Activated CD4-positive, alpha-beta T cell treated with anti-CD3 and anti-CD28 coated beads, Interleukin-2, amount 10 ng/mL, durations not matched to agents 24 days and 14 days (primary cell): ENCODE measurements at regions of chr7 and their contacts with region 1.

Region 1: DNA sequence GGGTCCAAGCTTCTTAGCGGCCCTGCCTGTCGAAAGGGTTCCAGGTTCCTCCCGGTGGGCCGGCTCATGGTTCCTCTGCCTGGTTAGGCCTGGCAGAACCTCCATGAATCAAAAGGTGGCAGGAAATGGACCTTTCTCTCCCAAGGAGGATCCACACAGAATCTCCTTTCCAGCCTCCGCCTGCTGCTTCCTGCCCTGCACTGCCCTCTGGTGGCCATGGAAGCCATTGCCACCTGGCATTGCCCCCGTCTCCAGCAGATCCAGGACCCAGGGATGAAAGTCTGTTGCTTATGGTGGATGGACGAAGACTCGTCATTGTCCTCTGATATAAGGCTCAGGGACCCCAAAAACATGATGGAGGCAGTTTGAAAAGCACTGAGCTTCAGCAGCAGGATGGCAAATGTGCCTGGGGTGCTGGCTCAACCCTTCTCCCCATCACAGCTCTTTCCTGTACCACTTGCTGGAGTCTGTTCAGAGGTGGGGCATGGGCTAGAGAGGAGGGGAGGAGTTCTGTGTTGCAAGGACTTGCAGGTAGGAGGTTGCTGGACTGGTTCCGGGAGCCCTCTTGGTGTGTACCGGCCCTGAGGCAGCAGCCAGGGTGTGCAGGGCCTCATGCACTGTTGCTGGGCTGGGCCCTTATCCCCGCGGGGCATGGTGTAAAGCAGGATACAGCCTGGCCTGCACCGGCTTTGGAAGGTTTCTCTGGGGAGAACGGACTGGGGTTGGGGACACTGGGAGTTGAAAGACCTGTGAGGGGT is 11.3 kb upstream of the INMT start:
- DNase-seq: peak; percentile 94
- H3K4me3 Mint-ChIP-seq: no peak overlapping the region
- H3K27ac Mint-ChIP-seq: no peak overlapping the region
- H3K4me1 Mint-ChIP-seq: peaks cover 23% of the 10 kb centered on the region
- H3K27me3 Mint-ChIP-seq: peaks cover 4% of the 10 kb centered on the region

Region 2: GRCh38 chr7:30510124-30511075 is 230.2 kb before region 1 on chr7:
- intact Hi-C with region 1: loop called (anchors 1 kb)
- DNase-seq: peak; percentile 76
- H3K4me3 Mint-ChIP-seq: no peak overlapping the region
- H3K27ac Mint-ChIP-seq: no peak overlapping the region
- H3K4me1 Mint-ChIP-seq: peaks cover 9% of the 10 kb centered on the region
- H3K27me3 Mint-ChIP-seq: no peaks in the 10 kb centered on the region

Region 3: DNA sequence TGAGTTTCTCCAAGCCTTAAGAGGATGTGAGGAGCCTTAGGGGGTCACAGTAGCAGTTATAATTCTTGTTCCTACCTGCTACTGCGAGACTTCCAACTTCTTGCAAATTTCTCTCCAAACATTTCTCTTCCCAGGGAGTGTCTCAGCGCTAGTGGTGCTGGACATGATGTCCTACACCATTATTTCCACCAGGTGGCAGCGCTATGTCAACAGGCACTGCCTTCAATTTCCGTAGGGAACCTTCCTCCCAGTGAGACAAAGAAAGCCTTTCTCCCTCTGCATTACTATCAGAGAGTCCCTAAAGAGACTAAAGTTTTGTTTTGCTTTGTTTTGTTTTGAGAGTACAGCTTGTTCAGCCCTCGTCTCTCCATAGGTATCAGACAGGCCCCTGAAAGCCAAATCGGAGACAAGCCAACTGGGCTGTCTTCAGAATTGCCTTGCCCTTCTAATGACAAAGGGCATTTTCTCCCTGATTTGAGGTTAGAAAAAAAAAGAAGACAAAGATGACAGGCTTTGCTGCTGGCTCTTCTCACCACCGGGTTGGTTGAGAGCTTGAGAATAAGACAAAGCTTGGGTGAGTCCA is 191.8 kb before region 1 on chr7:
- intact Hi-C with region 1: loop called (anchors 1 kb)
- DNase-seq: peak; percentile 78
- H3K4me3 Mint-ChIP-seq: no peak overlapping the region
- H3K27ac Mint-ChIP-seq: no peak overlapping the region
- H3K4me1 Mint-ChIP-seq: peaks cover 1% of the 10 kb centered on the region
- H3K27me3 Mint-ChIP-seq: no peaks in the 10 kb centered on the region

Region 4: DNA sequence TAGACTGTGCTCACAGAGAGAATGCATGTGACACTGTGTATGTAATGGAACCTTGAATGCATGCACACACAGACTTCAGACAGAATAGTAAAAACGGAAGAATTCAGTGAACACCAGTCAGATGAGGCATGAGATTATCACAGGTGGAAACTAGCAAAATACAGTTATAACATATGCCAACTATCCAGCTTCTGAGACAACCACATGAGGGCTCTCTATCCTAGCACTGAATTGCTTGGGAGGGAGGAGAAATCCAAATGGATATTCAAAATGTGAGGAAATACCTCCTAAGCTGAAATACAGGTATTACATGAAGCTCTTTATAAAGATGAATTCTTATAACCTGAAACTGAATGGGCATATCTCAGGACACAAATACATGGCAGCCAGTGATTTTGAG is 115.3 kb before region 1 on chr7:
- intact Hi-C with region 1: loop called (anchors 5 kb)
- DNase-seq: no peak
- H3K4me3 Mint-ChIP-seq: no peak overlapping the region
- H3K27ac Mint-ChIP-seq: peak overlapping the region; percentile 44
- H3K4me1 Mint-ChIP-seq: peaks cover 20% of the 10 kb centered on the region
- H3K27me3 Mint-ChIP-seq: no peaks in the 10 kb centered on the region

Region 5: DNA sequence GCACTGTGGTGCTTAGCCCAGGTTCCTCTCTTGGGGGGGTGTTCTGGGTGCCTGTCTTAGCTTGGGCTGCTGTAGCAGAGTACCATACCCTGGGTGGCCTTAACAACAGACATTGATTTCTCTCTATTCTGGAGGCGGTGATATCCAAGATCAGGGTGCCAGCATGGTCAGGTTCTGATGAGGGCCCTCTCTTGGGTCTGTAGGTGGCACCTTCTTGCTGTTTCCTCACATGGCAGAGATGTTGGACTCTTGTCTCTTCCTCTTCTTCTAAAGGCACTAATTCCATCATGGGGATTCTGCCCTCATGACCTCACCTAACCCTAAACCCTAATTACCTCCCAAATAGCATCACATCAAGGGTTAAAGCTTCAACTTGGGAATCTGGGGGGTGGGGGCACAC is 38.4 kb before region 1 on chr7:
- intact Hi-C with region 1: loop called (anchors 1 kb)
- DNase-seq: peak; percentile 81
- H3K4me3 Mint-ChIP-seq: no peak overlapping the region
- H3K27ac Mint-ChIP-seq: no peak overlapping the region
- H3K4me1 Mint-ChIP-seq: peaks cover 21% of the 10 kb centered on the region
- H3K27me3 Mint-ChIP-seq: peaks cover 11% of the 10 kb centered on the region

Region 6: DNA sequence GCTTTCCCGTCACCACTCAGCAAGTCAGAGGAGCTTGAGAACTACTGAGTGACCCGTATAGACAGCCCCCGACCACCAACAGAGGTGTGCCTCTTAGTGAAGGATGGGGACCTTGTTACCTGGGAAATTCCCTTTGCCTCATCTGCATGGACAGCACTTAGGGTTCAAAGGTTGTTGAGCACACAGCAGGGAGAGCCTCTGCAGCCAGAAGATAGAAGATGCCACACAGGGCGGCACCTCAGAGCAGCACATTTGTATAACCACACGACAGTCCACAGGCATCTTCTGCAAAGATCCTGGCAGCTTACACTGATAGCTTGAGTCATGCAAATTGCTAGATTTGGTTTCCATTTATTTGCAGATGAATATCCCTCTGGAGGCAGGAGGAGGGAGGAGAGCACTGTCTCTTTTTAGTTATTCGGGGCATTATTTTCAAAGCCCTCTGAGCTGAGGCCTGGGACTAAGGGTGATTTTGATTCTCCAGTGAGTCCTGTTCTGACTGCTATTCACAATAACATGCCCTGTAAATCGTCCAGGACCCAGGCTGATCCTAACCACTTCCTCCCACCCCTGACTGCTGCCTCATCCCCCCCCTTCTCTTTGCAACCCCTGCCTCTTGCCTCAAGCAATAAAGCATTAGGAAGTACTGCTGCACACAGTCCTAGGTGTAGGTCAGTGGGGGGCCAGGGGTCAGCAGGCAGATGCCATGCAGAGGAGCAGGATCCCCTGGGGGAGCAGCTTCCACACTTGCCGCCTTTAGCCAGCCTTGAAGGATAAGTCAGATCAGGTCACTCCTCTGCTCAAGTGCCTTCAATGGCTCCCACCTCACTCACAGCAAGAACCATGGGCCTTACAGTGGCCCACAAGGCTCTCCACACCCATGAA is 13.3 kb before region 1 on chr7:
- intact Hi-C with region 1: loop called (anchors 1 kb)
- DNase-seq: peak; percentile 86
- H3K4me3 Mint-ChIP-seq: peak overlapping the region; percentile 73
- H3K27ac Mint-ChIP-seq: peak overlapping the region; percentile 82
- H3K4me1 Mint-ChIP-seq: peaks cover 50% of the 10 kb centered on the region
- H3K27me3 Mint-ChIP-seq: no peaks in the 10 kb centered on the region

Region 7: GRCh38 chr7:30988351-30989000 is 247.9 kb after region 1 on chr7:
- intact Hi-C with region 1: no loop called
- DNase-seq: no peak
- H3K4me3 Mint-ChIP-seq: no peak overlapping the region
- H3K27ac Mint-ChIP-seq: peak overlapping the region; percentile 42
- H3K4me1 Mint-ChIP-seq: peaks cover 5% of the 10 kb centered on the region
- H3K27me3 Mint-ChIP-seq: peaks cover 28% of the 10 kb centered on the region